Cardiac septum (tissue), 1 donor: ENCODE measurements at regions of chr1 and their contacts with region 1.

Region 1: DNA sequence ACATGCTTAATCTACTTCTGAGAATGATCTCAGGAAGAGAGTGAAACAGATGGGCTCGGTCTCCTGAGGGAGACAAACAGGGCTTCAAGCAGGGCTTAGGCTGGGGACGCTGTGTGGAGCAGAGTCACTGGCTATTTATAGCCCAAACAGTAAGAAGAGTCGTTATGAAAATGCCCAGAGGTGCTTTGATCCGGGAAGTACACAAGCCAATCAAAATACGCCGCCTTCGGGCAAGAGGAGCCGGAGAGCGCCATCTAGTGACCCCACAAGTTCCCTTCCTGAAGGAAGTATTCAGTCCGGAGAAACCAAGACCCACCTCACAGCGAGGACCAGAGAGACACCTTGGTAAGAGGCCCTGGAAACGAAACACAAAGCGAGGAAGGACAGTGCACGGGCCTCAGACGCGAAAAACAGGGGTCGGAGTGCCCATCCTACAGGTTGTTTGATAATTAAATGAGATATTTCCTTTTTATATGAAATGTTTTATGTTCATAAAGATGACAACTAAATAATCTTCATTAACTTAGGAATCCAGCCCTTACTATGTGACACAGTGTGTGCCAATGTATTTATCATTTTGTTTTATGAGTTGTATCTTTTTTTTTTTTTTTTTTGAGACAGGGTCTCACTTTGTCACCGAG is 25.0 kb upstream of the SCCPDH start:
- DNase-seq: peak; percentile 89

Region 2: DNA sequence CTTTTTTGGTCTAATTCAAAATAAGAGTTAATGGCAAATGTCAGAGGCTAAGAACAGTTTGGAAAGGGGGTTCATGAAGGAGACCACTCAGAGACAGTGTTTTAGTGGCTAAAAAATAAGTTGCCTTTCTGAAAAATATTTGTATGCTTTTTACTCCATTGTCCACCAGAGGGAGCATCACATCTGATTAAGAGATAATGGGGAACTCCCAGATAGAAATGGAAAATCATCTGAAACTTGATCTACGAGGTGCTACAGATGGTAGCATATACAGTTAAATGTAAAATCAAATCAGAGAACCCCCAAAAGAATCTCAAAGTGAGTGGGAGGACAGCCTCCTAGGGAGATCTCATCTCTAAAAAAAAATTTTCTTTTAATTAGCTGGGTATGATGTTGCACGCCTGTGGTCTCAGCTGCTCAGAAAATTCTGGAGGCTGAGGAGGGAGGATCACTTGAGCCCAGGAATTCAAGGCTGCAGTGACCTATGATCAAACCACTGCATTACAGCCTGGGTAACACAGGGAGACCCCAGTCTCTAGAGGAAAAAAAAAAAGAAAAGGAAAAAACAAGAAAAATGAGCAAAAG is 201.8 kb before region 1 on chr1:
- intact Hi-C with region 1: loop called (anchors 1 kb)
- DNase-seq: no peak

Region 3: GRCh38 chr1:246647113-246647512 is 52.1 kb before region 1 on chr1:
- intact Hi-C with region 1: loop called (anchors 5 kb)
- DNase-seq: peak; percentile 82

Region 4: DNA sequence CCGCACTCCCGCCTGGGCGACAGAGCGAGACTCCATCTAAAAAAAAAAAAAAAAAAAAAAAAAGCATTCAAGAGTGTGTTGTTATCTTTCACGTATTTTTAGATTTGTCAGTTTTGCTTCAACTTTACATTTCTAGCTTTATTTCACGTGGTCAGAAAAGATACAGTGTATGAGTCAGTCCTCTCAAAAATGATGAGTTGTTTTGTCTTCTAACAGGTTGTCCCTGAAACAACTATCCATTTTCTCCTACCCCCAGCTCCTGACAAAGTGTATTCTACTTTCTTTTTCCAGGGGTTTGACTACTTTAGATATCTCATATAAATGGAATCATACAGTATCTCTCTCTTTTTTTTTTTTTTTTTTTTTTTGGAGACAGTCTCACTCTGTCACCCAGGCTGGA is 314.2 kb after region 1 on chr1:
- intact Hi-C with region 1: no loop called
- DNase-seq: no peak